Heart right ventricle (tissue), 16 donors: ENCODE measurements at regions of chr13 and their contacts with region 1.

Region 1: DNA sequence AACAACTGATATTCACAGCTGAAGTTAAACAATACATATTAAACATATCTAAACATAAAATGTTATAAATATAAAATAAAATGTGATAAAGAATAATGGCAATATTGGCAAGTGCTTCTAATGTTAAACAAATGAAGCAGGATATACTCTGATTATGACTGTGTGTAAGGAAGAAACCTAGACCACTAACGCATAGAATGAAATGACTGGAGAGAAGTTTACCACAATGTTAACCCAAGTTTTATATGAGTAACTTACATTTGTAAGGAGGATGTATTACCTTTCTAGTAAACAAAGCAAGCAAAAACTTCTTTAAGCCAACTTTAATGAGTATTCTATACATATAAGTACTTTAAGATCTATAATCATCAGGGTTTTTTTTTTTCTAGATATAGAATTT is 43.0 kb downstream of the RB1 start:
- DNase-seq: no peak
- ATAC-seq: no peak
- H3K4me3 ChIP-seq: no peak overlapping the region
- H3K27ac ChIP-seq: no peak overlapping the region
- H3K4me1 ChIP-seq: peaks cover 0 to 3% (median 0%) of the 10 kb centered on the region in 9 donors
- H3K27me3 ChIP-seq: no peaks in the 10 kb centered on the region
- CTCF ChIP-seq: no peak

Region 2: DNA sequence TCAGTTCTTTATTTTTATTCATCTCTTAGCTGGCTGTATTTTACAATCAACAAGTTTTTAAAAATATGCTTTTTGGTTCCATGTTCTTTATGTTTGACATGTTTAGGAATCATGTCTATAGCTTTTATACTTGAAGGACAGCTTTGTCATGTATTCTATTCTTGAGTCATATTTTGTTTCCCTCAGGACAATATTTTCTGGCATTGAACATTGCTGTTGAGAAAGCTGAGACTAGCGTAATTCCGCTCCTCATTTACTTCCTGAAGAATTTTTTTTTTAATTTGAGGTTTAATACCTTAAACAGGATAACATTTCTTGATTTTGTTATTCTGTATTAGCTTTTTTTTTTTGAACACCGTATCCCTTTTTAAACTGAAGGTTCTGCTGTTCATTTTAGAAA is 10.2 kb after region 1 on chr13:
- intact Hi-C with region 1: loop called in 1 of 10 experiments (anchors 2 kb)
- DNase-seq: no peak
- ATAC-seq: peak in 5 of 8 donors; percentile 57 to 76 (median 63)
- H3K4me3 ChIP-seq: no peak overlapping the region
- H3K27ac ChIP-seq: peak overlapping the region in 4 of 10 donors; percentile 28 to 64 (median 35)
- H3K4me1 ChIP-seq: peaks cover 0 to 17% (median 0%) of the 10 kb centered on the region in 9 donors
- H3K27me3 ChIP-seq: no peaks in the 10 kb centered on the region
- CTCF ChIP-seq: no peak

Region 3: DNA sequence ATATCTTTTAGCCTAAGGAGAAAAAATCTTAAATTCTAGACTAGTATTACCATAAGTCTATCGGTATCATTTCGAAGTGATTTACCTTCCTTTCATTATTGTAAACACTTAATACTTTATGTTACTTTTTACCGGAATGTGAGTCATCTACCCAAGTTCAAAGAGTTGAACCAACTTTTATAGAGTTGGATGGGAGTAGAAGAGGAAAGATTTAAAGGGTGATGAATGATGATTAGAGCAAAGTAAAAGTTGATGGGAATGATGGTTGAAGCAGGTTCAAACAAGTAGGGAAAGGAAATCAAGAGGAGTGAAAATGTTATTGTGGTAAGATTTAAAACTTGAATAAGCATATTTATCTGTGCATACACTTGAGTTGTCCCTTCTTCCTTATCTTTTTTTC is 77.6 kb after region 1 on chr13:
- intact Hi-C with region 1: no loop called
- DNase-seq: no peak
- ATAC-seq: no peak
- H3K4me3 ChIP-seq: no peak overlapping the region
- H3K27ac ChIP-seq: no peak overlapping the region
- H3K4me1 ChIP-seq: peaks cover 0 to 19% (median 5%) of the 10 kb centered on the region in 9 donors
- H3K27me3 ChIP-seq: no peaks in the 10 kb centered on the region
- CTCF ChIP-seq: no peak

Region 4: DNA sequence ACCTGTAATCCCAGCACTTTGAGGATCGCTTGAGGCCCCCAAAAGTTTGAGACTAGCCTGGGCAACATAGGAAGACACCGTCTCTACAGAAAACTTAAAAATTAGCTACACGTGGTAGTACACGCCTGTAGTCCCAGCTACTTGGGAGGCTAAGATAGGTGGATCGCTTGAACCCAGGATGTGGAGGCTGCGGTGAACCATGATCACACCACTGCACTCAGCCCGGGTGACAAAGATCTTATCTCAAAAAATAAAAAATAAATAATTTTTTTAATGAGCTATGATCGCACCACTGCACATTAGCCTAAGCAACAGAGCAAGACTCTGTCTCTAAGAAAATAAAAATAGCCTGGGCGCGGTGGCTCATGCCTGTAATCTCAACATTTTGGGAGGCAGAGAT is 179.7 kb after region 1 on chr13:
- intact Hi-C with region 1: no loop called
- DNase-seq: no peak
- ATAC-seq: no peak
- H3K4me3 ChIP-seq: no peak overlapping the region
- H3K27ac ChIP-seq: peak overlapping the region in 1 of 10 donors; percentile 99
- H3K4me1 ChIP-seq: peaks cover 0 to 56% (median 31%) of the 10 kb centered on the region in 9 donors
- H3K27me3 ChIP-seq: no peaks in the 10 kb centered on the region
- CTCF ChIP-seq: no peak